PC-3 (cell line): ENCODE measurements at regions of chr5 and their contacts with region 1.

Region 1: GRCh38 chr5:128674825-128675446 is 136.9 kb upstream of the FBN2 start:
- DNase-seq: peak; percentile 84
- ATAC-seq: peak; percentile 84
- H3K4me3 ChIP-seq: no peak overlapping the region
- H3K27ac ChIP-seq: no peak overlapping the region
- H3K4me1 ChIP-seq: peaks cover 3% of the 10 kb centered on the region; the same call in 1 of the 2 replicates
- H3K27me3 ChIP-seq: no peaks in the 10 kb centered on the region
- CTCF ChIP-seq: peak; percentile 93

Region 2: GRCh38 chr5:127564002-127564769 is 1110.8 kb before region 1 on chr5:
- CTCF ChIA-PET with region 1: no interaction called
- POLR2A ChIA-PET with region 1: no interaction called
- intact Hi-C with region 1: loop called (anchors 10 kb)
- DNase-seq: peak; percentile 77
- ATAC-seq: peak; percentile 89
- H3K4me3 ChIP-seq: no peak overlapping the region
- H3K27ac ChIP-seq: no peak overlapping the region
- H3K4me1 ChIP-seq: no peaks in the 10 kb centered on the region
- H3K27me3 ChIP-seq: peaks cover 28% of the 10 kb centered on the region; the same call in 1 of the 2 replicates
- CTCF ChIP-seq: peak; percentile 91

Region 3: DNA sequence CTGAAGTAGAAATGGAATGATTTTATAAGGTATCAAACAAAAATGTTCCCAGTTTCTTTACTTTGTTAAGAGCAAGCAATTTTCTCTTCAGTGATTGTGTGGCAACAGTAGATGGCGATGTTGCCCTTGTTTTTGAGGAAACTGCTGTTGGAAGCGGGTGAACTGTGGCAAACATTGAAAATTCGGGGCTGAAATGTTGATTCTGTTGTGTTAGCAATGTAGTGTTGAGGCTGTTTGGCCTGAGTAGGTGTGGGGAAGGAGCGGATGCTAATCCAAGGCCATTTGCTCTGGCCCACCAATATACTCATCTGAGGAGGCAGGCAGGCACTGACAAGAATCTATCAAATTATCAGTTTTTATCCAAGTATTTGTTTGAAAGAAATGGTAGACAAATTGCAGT is 461.6 kb before region 1 on chr5:
- CTCF ChIA-PET with region 1: no interaction called
- POLR2A ChIA-PET with region 1: no interaction called
- intact Hi-C with region 1: loop called (anchors 2 kb)
- DNase-seq: peak; percentile 84
- ATAC-seq: peak; percentile 53
- H3K4me3 ChIP-seq: no peak overlapping the region
- H3K27ac ChIP-seq: no peak overlapping the region
- H3K4me1 ChIP-seq: peaks cover 13% of the 10 kb centered on the region
- H3K27me3 ChIP-seq: no peaks in the 10 kb centered on the region
- CTCF ChIP-seq: peak; percentile 97

Region 4: GRCh38 chr5:128506643-128507042 is 168.3 kb before region 1 on chr5:
- CTCF ChIA-PET with region 1: no interaction called
- POLR2A ChIA-PET with region 1: no interaction called
- intact Hi-C with region 1: no loop called
- DNase-seq: no peak
- ATAC-seq: no peak
- H3K4me3 ChIP-seq: no peak overlapping the region
- H3K27ac ChIP-seq: no peak overlapping the region
- H3K4me1 ChIP-seq: no peaks in the 10 kb centered on the region
- H3K27me3 ChIP-seq: no peaks in the 10 kb centered on the region
- CTCF ChIP-seq: no peak

Region 5: DNA sequence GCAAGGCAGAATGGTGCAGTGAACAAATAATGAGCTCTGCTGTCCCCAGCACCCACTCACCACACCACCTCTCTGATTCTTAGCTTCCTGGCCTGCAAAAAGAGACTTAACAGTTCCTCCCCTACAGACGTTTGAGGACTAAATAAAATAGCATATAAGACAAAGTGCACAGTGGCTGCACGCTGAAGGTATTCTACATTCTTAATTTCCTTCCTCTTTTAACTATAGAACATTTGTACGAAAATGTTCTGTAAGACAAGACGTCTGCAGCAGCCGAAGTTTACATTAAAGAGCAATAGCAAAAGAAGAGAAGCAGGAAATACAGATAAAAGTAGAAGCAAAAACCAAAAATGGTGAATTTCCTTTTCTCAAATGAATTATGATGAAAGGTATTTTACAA is 152.6 kb before region 1 on chr5:
- CTCF ChIA-PET with region 1: no interaction called
- POLR2A ChIA-PET with region 1: no interaction called
- intact Hi-C with region 1: loop called (anchors 5 kb)
- DNase-seq: no peak
- ATAC-seq: no peak
- H3K4me3 ChIP-seq: no peak overlapping the region
- H3K27ac ChIP-seq: no peak overlapping the region
- H3K4me1 ChIP-seq: no peaks in the 10 kb centered on the region
- H3K27me3 ChIP-seq: no peaks in the 10 kb centered on the region
- CTCF ChIP-seq: no peak

Region 6: GRCh38 chr5:128538250-128539037 is 136.5 kb before region 1 on chr5:
- CTCF ChIA-PET with region 1: no interaction called
- POLR2A ChIA-PET with region 1: no interaction called
- intact Hi-C with region 1: loop called (anchors 1 kb)
- DNase-seq: peak; percentile 77
- ATAC-seq: peak; percentile 90
- H3K4me3 ChIP-seq: peak overlapping the region; percentile 92
- H3K27ac ChIP-seq: no peak overlapping the region
- H3K4me1 ChIP-seq: peaks cover 22% of the 10 kb centered on the region
- H3K27me3 ChIP-seq: no peaks in the 10 kb centered on the region
- CTCF ChIP-seq: no peak

Region 7: DNA sequence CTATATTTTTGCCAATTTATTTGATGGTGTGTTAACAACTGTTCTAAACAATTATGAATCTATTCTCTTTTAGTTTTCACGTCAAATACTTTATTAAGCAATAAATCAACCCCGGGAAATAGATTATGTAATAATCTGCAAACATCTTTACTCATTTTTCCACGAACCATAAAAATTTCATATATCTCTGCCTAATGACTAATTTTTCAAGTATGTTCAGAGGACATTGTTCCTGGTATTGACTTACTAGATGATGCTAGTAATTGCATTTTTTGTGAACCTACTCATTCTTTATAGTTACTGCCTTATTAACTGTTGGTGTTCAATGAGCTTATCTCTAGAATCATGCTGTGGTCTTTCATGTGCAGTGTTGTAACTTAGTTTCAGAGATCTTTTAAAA is 95.8 kb before region 1 on chr5:
- CTCF ChIA-PET with region 1: no interaction called
- POLR2A ChIA-PET with region 1: no interaction called
- intact Hi-C with region 1: loop called (anchors 1 kb)
- DNase-seq: peak; percentile 92
- ATAC-seq: peak; percentile 90
- H3K4me3 ChIP-seq: peak overlapping the region; percentile 43; the same call in 1 of the 2 replicates
- H3K27ac ChIP-seq: peak overlapping the region; percentile 97
- H3K4me1 ChIP-seq: peaks cover 38% of the 10 kb centered on the region
- H3K27me3 ChIP-seq: no peaks in the 10 kb centered on the region
- CTCF ChIP-seq: no peak

Region 8: GRCh38 chr5:128615578-128615977 is 59.4 kb before region 1 on chr5:
- CTCF ChIA-PET with region 1: no interaction called
- POLR2A ChIA-PET with region 1: no interaction called
- intact Hi-C with region 1: loop called (anchors 5 kb)
- DNase-seq: peak; percentile 63
- ATAC-seq: peak; percentile 76
- H3K4me3 ChIP-seq: no peak overlapping the region
- H3K27ac ChIP-seq: no peak overlapping the region
- H3K4me1 ChIP-seq: peaks cover 20% of the 10 kb centered on the region
- H3K27me3 ChIP-seq: no peaks in the 10 kb centered on the region
- CTCF ChIP-seq: no peak

Region 9: DNA sequence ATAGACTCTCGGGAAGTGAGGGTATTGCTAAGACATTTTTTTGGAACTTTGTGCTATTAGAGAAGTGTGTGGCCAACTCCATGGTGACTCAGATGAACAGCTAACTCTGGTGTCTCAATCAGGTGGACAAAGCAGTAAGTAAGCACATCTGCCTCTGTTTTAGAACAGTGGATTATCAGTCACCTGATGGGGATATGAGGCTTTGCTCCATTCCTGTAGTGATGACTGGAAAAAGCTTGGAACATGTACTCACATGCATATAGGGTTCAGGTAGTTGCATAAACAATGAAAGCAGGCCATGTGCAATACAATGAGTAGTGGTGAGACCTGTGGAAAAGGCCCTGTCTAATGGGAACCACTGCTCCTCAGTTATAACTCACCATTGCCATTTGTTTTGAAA is 31.3 kb after region 1 on chr5:
- CTCF ChIA-PET with region 1: no interaction called
- POLR2A ChIA-PET with region 1: no interaction called
- intact Hi-C with region 1: no loop called
- DNase-seq: no peak
- ATAC-seq: no peak
- H3K4me3 ChIP-seq: no peak overlapping the region
- H3K27ac ChIP-seq: no peak overlapping the region
- H3K4me1 ChIP-seq: peaks cover 9% of the 10 kb centered on the region; the same call in 1 of the 2 replicates
- H3K27me3 ChIP-seq: no peaks in the 10 kb centered on the region
- CTCF ChIP-seq: no peak